ENCODE measurements at regions of chr20 and their contacts with region 1.

Region 1: GRCh38 chr20:35741892-35742740 is at the start of gene RBM39:
- DNase-seq: peak; percentile 96

Region 2: DNA sequence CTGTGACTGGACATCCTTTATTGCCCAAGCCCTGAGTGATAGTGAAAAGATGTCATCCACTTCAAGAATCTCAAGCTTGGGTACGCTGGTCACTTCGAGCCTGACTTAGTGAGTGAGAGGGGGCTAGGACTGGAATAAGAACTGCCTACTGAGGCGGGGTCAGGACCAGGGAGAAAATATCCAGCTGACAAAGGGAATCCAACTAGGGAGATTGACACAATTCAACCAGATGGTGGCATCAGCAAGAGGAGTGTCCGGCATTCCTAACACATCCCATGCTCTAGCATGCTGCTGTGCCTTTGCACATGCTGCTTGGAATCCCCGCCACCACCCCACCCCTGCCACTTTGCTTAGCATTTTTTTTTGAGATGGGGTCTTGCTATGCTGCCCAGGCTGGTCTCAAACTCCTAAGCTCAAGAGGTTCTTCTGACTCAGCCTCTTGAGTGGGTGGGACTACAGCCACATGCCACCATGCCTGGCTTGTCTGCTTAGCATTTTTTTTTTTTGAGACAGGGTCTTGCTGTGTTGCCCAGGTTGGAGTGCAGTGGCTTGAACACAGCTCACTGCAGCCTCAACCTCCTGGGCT is 293.2 kb before region 1 on chr20:
- CTCF ChIA-PET with region 1: no interaction called
- POLR2A ChIA-PET with region 1: no interaction called
- DNase-seq: no peak

Region 3: DNA sequence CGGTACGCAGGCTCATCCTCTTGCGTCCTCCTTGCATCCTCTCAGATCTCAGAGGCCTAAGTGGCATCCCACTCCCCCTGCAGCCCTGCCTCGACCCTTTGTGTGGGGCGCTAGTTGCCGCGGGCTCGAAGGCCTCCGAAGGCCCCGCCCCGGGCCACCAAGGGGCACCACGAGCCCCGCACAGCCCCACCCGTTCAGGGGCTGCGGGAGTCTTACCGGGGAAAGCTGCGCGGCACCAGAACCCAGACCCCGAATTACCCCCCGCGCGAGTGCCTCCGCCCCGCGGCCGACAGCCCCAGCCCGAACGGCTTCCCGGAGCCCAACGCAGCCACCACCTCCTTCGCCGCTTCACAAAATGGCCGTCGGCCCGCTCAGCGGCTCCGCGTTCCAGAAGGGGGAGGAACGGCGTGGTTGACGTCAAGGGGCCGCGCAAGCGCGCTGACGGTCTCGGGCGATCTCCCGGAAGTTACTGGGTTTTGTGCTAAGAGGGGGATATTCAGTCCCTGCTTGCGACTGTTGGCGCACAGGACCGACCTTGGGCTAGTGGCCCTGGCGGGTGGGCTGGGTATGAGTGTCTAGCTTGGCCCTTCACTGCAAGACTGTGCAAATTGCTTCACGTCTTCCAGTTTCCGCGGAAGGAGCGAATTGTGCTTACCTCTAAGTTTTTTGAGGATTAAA is 77.4 kb before region 1 on chr20 and contains the starts of genes CPNE1 and RBM12:
- CTCF ChIA-PET with region 1: interaction called, 3 read pairs
- POLR2A ChIA-PET with region 1: interaction called, 14 read pairs
- DNase-seq: peak; percentile 97

Region 4: DNA sequence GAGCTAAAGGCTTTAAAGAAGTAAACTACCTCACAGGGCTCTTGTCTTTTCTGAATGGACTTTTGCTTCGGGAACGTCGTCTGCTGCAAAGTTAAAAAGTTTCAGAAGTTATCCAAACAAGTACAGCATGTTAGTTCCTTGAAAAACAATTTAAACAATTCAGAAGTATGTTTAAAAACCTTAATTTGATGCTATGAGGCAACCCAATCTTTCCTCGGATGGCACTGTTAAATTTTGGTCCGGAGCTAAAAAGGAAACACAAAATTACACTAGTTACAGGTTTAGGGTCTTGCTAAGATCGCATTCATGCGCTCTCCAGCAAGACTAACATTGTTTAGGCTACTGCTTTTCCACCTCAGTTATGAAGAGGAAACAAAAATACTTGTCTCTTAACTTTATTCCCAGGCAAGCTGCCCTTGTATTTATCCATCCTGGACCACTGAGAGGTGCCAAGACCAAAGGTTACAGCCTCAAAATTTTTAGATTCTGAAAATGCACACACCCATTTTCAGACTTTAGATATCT is 12.8 kb before region 1 on chr20:
- CTCF ChIA-PET with region 1: no interaction called
- POLR2A ChIA-PET with region 1: interaction called, 10 read pairs
- DNase-seq: no peak

Region 5: DNA sequence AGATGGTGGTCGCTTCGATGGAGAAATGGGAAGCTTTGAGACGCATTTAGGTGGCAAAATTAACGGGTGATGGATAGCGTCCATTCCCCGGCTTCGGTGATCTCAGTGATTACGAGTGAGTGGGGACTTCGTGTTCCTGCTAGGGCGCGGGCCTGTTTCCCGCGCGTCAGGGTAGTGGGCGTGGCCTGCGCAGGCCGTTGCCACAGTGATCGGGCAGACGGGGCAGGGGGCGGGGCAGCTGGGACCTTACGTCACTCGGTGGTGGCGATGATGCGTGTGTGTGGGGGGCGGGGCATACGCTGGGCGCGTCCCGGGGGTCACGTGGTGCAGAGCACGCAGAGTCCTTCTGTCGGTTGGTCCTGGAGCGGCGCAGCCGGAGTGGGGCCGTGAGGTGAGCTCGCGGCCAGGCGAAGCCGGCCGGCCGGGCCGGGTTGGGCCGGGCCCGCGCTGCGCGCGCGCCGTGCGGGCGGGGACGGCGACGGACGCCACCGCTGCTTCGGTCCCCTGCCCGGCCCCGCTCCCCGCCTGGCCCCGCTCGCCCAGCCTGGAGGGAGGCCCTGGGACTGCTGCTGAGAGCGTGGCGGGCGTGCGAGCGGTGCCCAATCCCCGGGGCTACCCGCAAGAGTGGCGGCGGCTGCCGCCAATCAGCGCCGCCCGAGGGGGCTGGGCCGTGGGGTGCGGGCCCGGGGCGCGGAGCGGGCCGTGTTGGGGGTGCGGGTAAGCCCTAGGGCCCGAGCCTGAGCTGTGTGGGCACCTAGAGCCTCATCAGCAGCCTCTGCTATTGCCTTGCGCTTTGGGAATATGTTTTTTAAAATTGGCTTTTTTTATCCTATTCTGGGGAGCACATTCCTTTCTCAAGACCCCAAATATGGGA is 29.8 kb after region 1 on chr20 and contains the start of gene PHF20:
- CTCF ChIA-PET with region 1: interaction called, 4 read pairs
- POLR2A ChIA-PET with region 1: interaction called, 53 read pairs
- DNase-seq: peak; percentile 98

Region 6: DNA sequence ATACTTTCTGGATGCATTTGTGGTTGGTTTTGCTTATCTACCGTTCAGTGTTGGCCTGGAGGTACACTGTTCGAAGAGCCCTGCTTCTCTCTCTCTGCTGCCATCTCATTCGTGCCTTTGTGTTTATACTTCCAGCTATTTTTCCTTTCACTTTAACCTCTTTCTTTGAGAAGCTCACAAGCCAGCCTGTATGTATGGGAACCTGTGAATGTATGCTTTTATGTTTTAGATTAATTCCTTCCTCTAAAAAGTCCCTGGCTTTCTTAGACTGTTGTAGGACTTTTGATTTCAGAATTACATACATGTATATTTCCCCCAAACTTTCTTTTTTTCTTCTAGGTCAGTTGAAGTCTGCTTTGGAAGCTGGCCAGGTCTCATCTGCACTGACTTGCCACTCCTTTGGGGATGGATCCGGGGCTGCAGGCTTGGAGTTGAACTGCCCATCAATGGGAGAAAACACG is 129.2 kb after region 1 on chr20:
- CTCF ChIA-PET with region 1: no interaction called
- POLR2A ChIA-PET with region 1: interaction called, 33 read pairs
- DNase-seq: no peak

Region 7: GRCh38 chr20:35883778-35884540 is 141.8 kb after region 1 on chr20:
- CTCF ChIA-PET with region 1: no interaction called
- POLR2A ChIA-PET with region 1: interaction called, 30 read pairs
- DNase-seq: peak; percentile 76